A549 (cell line): ENCODE measurements at regions of chr11 and their contacts with region 1.

Region 1: GRCh38 chr11:3849297-3849874 is 6.1 kb upstream of the STIM1 start:
- DNase-seq: peak; percentile 49 to 51
- ATAC-seq: peak; percentile 74 to 87; a peak in 5 of 6 replicates
- H3K4me3 ChIP-seq: no peak overlapping the region
- H3K27ac ChIP-seq: no peak overlapping the region
- H3K4me1 ChIP-seq: peaks cover 4% of the 10 kb centered on the region
- CTCF ChIP-seq: peak; percentile 87
- EP300 ChIP-seq: no peak; a peak in 1 of 5 replicates
- POLR2A ChIP-seq: no peak
- RAD21 ChIP-seq: peak; percentile 69 to 72

Region 2: DNA sequence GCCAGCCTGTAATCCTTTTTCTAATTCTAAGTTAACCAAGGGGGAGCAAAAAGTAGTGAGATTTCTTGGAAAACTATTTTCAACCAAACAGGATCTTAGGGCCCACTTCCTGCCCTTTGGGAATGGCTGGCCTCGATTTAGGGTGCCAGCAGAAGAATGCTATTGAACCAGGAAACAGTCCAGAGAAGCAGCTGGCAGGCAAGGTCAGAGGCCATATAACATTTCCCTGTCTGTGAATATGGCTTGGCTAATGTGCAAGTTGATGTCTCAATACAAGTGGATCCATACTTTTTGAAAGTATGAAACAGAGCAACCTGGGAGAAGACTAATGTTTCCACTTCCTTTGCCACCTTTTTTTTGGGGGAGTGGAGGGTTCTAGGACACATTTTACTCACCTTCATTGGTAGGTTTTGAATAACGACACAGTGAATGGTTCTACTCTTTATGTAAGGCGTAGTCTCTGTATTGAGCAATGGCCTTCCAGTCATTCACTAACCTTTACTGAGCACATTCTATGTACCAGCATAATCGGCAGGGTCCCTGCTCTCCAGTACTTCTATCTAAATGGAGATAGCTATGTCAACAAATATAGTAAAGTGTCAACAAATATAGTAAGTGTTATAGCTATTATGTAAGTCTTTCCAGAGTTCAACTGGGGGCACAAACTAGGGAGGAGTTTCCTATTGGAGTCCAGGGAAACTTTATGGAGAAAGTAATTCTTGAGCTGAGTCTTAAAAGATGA is 211.0 kb after region 1 on chr11:
- CTCF ChIA-PET with region 1: interaction called, 919 read pairs
- POLR2A ChIA-PET with region 1: no interaction called
- DNase-seq: no peak
- ATAC-seq: no peak
- H3K4me3 ChIP-seq: no peak overlapping the region
- H3K27ac ChIP-seq: no peak overlapping the region
- H3K4me1 ChIP-seq: no peaks in the 10 kb centered on the region
- CTCF ChIP-seq: no peak
- EP300 ChIP-seq: no peak
- POLR2A ChIP-seq: no peak
- RAD21 ChIP-seq: no peak

Region 3: DNA sequence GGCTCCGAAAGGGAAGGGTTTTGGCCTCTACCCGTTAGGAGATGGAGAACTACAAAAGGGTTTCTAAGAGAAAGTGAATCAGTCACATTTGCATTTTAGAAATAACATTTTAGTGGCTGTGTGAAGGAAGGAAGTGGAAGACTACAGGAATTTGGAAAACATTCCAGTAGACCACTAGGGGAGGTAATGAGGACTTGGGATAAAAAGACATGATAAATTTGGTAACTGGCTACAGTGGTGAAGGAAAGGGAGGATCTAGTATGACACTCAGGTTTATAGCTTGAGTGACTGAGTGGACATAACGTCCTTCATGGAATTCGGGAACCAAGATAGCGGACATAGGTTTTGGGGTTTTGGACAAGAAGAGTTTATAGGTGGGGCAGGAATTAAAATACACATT is 238.2 kb after region 1 on chr11:
- CTCF ChIA-PET with region 1: interaction called, 36 read pairs
- POLR2A ChIA-PET with region 1: no interaction called
- DNase-seq: peak in 1 of 2 experiments; percentile 11
- ATAC-seq: peak in 1 of 2 experiments; percentile 55; a peak in 3 of 6 replicates
- H3K4me3 ChIP-seq: no peak overlapping the region
- H3K27ac ChIP-seq: no peak overlapping the region
- H3K4me1 ChIP-seq: no peaks in the 10 kb centered on the region
- CTCF ChIP-seq: no peak
- EP300 ChIP-seq: no peak
- POLR2A ChIP-seq: no peak
- RAD21 ChIP-seq: no peak